Natural killer cell (primary cell): ENCODE measurements at regions of chrX and their contacts with region 1.

Region 1: GRCh38 chrX:9163214-9163681 is 129.3 kb upstream of the FAM9B start:
- DNase-seq: peak in 1 of 2 donors; percentile 1
- ATAC-seq: no peak
- H3K4me3 ChIP-seq: no peak overlapping the region
- H3K4me3 Mint-ChIP-seq: no peak overlapping the region
- H3K27ac ChIP-seq: no peak overlapping the region
- H3K27ac Mint-ChIP-seq: no peak overlapping the region
- H3K4me1 ChIP-seq: peaks cover 4% of the 10 kb centered on the region
- H3K4me1 Mint-ChIP-seq: peaks cover 21 to 24% of the 10 kb centered on the region in 2 donors
- H3K27me3 ChIP-seq: no peaks in the 10 kb centered on the region
- H3K27me3 Mint-ChIP-seq: peaks cover 5% of the 10 kb centered on the region in 2 donors
- CTCF ChIP-seq: no peak

Region 2: GRCh38 chrX:8815464-8816065 is 347.7 kb before region 1 on chrX:
- intact Hi-C with region 1: no loop called
- DNase-seq: peak in 1 of 2 donors; percentile 62
- ATAC-seq: peak in 1 of 3 donors; percentile 70
- H3K4me3 ChIP-seq: no peak overlapping the region
- H3K4me3 Mint-ChIP-seq: no peak overlapping the region
- H3K27ac ChIP-seq: no peak overlapping the region
- H3K27ac Mint-ChIP-seq: no peak overlapping the region
- H3K4me1 ChIP-seq: no peaks in the 10 kb centered on the region
- H3K4me1 Mint-ChIP-seq: no peaks in the 10 kb centered on the region
- H3K27me3 ChIP-seq: no peaks in the 10 kb centered on the region
- H3K27me3 Mint-ChIP-seq: peaks cover 0 to 3% of the 10 kb centered on the region in 2 donors
- CTCF ChIP-seq: peak; percentile 70

Region 3: DNA sequence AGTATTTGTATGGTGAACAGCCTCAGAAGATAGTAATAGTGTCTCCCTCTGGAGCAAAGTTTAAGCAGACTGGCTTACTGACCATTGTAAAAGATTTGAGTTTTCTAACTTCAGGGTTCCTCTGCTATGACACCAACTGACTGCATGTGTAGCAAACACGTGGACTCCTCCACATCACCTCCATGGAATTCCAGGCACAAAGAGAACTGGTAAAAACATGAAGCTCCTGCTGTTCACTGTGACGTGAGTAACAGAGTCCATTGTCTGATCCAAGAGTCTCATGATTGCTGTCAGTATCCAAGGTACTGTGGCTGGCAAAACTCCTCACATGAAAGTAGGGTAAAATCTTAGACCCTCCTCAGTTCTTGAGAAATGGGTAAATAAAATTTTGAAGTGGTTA is 21.8 kb before region 1 on chrX:
- intact Hi-C with region 1: no loop called
- DNase-seq: no peak
- ATAC-seq: no peak
- H3K4me3 ChIP-seq: no peak overlapping the region
- H3K4me3 Mint-ChIP-seq: no peak overlapping the region
- H3K27ac ChIP-seq: no peak overlapping the region
- H3K27ac Mint-ChIP-seq: no peak overlapping the region
- H3K4me1 ChIP-seq: no peaks in the 10 kb centered on the region
- H3K4me1 Mint-ChIP-seq: no peaks in the 10 kb centered on the region
- H3K27me3 ChIP-seq: no peaks in the 10 kb centered on the region
- H3K27me3 Mint-ChIP-seq: peaks cover 3 to 40% of the 10 kb centered on the region in 2 donors
- CTCF ChIP-seq: no peak

Region 4: DNA sequence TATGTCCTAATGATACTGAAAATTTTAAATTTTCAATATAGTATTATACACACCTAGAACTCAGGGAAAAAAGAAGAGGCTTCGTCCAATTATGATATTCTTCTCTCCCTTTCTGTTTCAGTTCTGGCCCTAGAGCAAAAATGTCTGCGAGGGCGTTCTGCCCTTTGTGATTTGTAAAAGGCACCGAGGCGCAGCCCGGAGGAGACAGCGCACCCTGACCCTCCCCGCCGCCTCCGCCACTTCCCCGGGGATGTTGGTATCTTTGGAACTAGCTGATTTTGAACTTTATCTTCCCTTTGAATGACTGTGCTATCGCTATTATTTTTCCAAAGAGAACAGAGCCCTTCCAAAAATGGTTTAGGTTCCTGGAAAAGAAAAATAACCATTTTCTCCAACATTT is 43.9 kb after region 1 on chrX:
- intact Hi-C with region 1: loop called (anchors 2 kb)
- DNase-seq: no peak
- ATAC-seq: no peak
- H3K4me3 ChIP-seq: no peak overlapping the region
- H3K4me3 Mint-ChIP-seq: peak overlapping the region; percentile 82
- H3K27ac ChIP-seq: no peak overlapping the region
- H3K27ac Mint-ChIP-seq: peak overlapping the region in 1 of 2 donors; percentile 89
- H3K4me1 ChIP-seq: peaks cover 22% of the 10 kb centered on the region
- H3K4me1 Mint-ChIP-seq: peaks cover 29 to 41% of the 10 kb centered on the region in 2 donors
- H3K27me3 ChIP-seq: no peaks in the 10 kb centered on the region
- H3K27me3 Mint-ChIP-seq: no peaks in the 10 kb centered on the region
- CTCF ChIP-seq: no peak

Region 5: DNA sequence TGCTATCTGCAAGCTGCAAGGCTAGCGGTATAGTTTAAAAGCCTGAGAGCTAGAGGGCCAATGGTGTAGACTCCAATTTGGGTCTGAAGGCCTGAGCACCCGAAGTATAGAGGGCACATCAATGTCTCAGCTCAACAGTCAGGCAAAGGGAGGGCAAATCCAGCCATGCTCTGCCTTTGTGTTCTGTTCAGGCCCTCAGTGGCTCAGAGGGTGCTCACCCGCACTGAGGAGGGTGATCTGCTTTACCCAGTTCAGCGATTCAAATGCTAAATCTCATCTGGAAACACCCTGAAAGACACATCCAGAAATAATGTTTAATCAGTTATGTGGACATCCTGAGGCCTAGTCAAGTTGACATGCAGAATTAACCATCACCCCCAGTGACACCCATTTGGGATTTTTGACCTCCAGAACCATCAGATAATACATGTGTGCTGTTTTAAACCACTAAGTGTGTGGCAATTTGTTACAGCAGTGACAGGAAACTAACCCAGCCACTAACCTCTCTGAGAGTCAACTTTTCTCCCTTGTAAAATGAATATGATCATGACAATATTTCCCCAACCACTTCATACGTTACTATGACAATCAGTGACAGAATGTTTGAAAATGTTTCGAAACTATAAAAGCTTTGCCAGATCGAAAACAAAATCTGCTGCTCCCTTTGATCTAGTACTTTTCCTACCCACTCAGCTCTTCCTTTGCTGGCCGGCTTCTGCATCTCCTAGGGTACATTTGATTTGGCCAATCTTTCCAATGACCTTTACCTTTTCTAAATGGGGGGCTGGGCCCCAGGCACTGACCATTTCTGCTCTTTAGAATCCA is 293.2 kb after region 1 on chrX:
- intact Hi-C with region 1: loop called (anchors 10 kb)
- DNase-seq: peak; percentile 16 to 80
- ATAC-seq: peak; percentile 84 to 91 (median 89)
- H3K4me3 ChIP-seq: no peak overlapping the region
- H3K4me3 Mint-ChIP-seq: peak overlapping the region; percentile 38
- H3K27ac ChIP-seq: peak overlapping the region; percentile 68
- H3K27ac Mint-ChIP-seq: peak overlapping the region; percentile 80 to 89
- H3K4me1 ChIP-seq: peaks cover 18% of the 10 kb centered on the region
- H3K4me1 Mint-ChIP-seq: peaks cover 10 to 23% of the 10 kb centered on the region in 2 donors
- H3K27me3 ChIP-seq: no peaks in the 10 kb centered on the region
- H3K27me3 Mint-ChIP-seq: no peaks in the 10 kb centered on the region
- CTCF ChIP-seq: no peak